GM12878 (cell line): ENCODE measurements at regions of chr19 and their contacts with region 1.

Region 1: DNA sequence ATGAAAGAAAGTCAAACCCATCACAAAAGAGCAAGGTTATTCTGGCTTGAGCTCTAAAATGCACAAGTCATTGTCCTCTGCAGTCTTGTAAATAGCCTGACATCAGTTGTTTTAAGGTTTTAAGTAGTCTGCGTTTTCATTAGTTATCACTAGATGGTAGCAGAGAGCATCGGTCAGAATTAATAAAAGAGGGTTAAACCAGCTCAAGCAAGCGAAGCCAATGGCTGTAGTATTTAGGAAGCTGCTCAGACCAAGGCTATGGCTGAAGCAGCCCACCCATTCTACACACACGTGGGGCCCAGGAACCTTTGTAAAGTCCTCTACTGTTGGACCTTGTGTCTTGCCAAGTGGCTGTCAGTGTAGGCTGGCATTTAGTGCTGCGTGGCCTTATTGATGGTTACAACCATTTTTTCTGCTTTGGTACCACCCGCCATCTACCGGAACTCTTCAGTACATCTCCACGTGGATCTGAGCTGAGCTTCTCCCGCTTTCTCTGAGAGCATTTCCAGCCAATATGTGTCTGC is 13.3 kb upstream of the ZNF57 start:
- DNase-seq: no peak
- ATAC-seq: peak; percentile 89
- H3K4me3 ChIP-seq: no peak overlapping the region
- H3K27ac ChIP-seq: no peak overlapping the region
- H3K4me1 ChIP-seq: peaks cover 3% of the 10 kb centered on the region; the same call in 1 of the 2 replicates
- H3K27me3 ChIP-seq: no peaks in the 10 kb centered on the region
- CTCF ChIP-seq: peak; percentile 61 to 65 (median 61)
- EP300 ChIP-seq: no peak
- POLR2A ChIP-seq: no peak
- RAD21 ChIP-seq: peak; percentile 60

Region 2: DNA sequence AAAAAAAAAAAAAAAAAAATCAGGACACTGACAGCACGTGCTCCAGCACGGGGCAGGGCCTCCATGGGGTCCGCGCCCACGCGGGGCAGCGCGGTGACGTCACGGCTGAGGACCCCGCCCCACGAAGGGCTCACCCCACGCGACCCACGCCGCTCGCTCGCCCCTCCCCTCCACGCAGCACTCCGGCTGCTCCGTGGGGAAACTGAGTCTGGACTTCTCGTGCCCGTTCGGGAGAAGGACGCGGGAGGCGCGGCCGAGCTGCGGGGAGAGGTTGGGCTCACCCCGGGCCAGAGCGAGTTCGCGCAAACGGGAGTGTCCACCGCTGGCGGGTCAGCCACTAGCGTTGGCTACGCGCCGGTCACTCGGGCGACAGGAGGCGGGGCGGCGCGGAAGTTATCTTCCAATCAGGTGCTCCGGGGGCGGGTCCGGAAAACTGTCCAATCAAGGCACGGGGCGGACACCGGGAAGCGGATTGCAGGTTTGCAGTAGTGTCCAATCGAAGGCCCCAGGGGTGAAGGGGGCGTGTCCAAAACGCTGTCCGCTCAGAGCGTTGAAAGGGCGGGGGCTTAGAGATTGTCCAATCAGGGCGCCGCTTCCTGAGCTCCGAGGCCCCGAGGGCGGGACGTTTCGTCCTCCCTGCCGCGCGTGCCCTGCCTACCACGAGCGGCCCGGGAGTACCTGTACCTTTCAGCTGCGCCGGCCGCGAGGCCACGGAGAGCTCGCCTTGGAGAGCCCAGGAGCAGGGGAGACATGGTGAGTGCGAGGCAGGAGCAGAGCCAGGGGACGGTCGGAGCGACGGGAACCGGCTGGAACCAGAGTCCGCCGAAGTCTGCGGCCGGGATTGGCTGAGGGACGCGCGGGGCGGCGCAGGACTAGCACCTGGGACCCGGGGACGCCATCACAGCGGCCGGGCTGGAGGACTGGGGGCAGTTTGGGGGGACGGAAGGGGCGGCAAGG is 13.1 kb after region 1 on chr19 and contains the start of gene ZNF57:
- CTCF ChIA-PET with region 1: interaction called, 10 read pairs
- POLR2A ChIA-PET with region 1: no interaction called
- RAD21 ChIA-PET with region 1: interaction called, 3 read pairs
- SMC1A ChIA-PET with region 1: interaction called, 4 read pairs
- in situ Hi-C with region 1: no loop called
- intact Hi-C with region 1: no loop called
- DNase-seq: peak; percentile 92
- ATAC-seq: peak; percentile 100
- H3K4me3 ChIP-seq: peak within 1 kb of the TSS; percentile 84
- H3K27ac ChIP-seq: peak within 1 kb of the TSS; percentile 79
- H3K4me1 ChIP-seq: no peaks in the 10 kb centered on the region
- H3K27me3 ChIP-seq: no peaks in the 10 kb centered on the region
- CTCF ChIP-seq: no peak
- EP300 ChIP-seq: no peak
- POLR2A ChIP-seq: peak; percentile 82
- RAD21 ChIP-seq: no peak
- polyA plus RNA-seq, gene ZNF57: 2.7 to 3.0 TPM

Region 3: DNA sequence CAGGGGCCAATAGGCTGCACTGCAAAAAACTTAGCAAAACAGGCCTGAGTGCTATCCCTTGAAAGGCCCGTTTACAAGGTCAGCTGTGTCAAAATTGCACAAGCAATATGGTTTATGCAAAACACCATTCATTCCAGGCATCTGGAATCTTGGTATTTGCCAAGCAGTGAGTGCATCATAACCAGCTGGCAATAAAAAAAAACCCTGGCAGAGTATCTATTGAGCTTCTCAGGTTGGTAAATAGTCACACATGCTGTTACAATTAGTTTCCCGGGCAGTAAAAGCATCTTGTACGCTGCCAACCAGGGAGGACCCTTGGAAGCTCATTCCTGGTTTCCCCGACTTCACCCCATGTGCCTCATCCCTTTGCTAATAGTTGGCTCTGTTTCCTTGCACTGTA is 36.1 kb after region 1 on chr19:
- CTCF ChIA-PET with region 1: interaction called, 13 read pairs
- POLR2A ChIA-PET with region 1: no interaction called
- RAD21 ChIA-PET with region 1: no interaction called
- SMC1A ChIA-PET with region 1: no interaction called
- in situ Hi-C with region 1: no loop called
- intact Hi-C with region 1: no loop called
- DNase-seq: no peak
- ATAC-seq: no peak
- H3K4me3 ChIP-seq: no peak overlapping the region
- H3K27ac ChIP-seq: no peak overlapping the region
- H3K4me1 ChIP-seq: no peaks in the 10 kb centered on the region
- H3K27me3 ChIP-seq: no peaks in the 10 kb centered on the region
- CTCF ChIP-seq: no peak
- EP300 ChIP-seq: no peak
- POLR2A ChIP-seq: no peak
- RAD21 ChIP-seq: no peak

Region 4: DNA sequence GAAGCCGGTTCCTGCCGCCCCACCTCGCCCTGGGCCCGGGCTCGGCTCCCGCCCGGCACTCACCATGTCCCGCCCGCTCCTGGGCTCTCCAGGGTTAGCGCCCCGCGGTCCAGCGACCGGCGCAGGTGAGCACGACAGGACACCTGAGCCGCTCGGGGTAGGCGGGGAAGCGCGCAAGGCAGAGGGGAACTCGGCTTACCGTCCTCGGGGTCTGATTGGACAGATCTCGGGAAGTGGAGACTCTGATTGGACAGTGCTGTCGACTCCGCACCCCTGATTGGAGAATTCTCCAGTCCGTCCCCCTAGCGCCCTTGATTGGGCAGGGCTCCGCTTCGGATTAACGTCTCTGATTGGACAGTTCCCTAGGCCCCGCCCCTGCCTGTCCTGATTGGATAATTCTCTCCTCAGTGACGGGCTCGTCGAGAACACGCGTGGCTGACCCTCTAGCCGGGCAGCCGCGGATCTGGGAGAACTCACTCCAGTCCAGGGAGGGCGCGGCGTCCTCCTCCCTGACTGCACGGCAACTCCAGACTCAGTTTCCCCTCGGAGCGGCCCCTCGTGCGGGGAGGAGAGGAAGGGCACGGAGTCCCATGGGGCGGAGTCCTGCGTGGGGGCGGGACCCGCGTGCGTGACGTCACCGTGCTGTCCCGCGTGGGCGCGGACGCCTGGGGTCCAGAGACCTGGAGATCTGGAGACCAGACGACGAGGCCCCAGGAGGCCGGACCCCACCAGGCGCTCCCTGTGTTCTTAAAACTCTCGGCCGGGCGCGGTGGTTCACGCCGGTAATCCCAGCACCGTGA is 57.5 kb after region 1 on chr19 and contains the start of gene ZNF77:
- CTCF ChIA-PET with region 1: interaction called, 29 read pairs
- POLR2A ChIA-PET with region 1: no interaction called
- RAD21 ChIA-PET with region 1: no interaction called
- SMC1A ChIA-PET with region 1: no interaction called
- in situ Hi-C with region 1: no loop called
- intact Hi-C with region 1: loop called (anchors 10 kb)
- DNase-seq: peak; percentile 98
- ATAC-seq: peak; percentile 100
- H3K4me3 ChIP-seq: peak within 1 kb of the TSS; percentile 82
- H3K27ac ChIP-seq: peak within 1 kb of the TSS; percentile 70
- H3K4me1 ChIP-seq: peaks cover 5% of the 10 kb centered on the region
- H3K27me3 ChIP-seq: no peaks in the 10 kb centered on the region
- CTCF ChIP-seq: no peak
- EP300 ChIP-seq: no peak
- POLR2A ChIP-seq: peak; percentile 81
- RAD21 ChIP-seq: no peak
- polyA plus RNA-seq, gene ZNF77: 1.9 TPM